GM12878 (cell line): ENCODE measurements at regions of chr10 and their contacts with region 1.

Region 1: GRCh38 chr10:99248824-99249223 is 13.2 kb upstream of the HPSE2 start:
- DNase-seq: no peak
- ATAC-seq: no peak
- H3K4me3 ChIP-seq: no peak overlapping the region
- H3K27ac ChIP-seq: no peak overlapping the region
- H3K4me1 ChIP-seq: no peaks in the 10 kb centered on the region
- H3K27me3 ChIP-seq: no peaks in the 10 kb centered on the region
- CTCF ChIP-seq: no peak
- EP300 ChIP-seq: no peak
- POLR2A ChIP-seq: no peak
- RAD21 ChIP-seq: no peak

Region 2: GRCh38 chr10:98460837-98461499 is 787.9 kb before region 1 on chr10:
- CTCF ChIA-PET with region 1: no interaction called
- POLR2A ChIA-PET with region 1: no interaction called
- RAD21 ChIA-PET with region 1: interaction called, 36 read pairs
- SMC1A ChIA-PET with region 1: interaction called, 3 read pairs
- in situ Hi-C with region 1: loop called (anchors 5 kb)
- intact Hi-C with region 1: no loop called
- DNase-seq: no peak
- ATAC-seq: no peak
- H3K4me3 ChIP-seq: no peak overlapping the region
- H3K27ac ChIP-seq: no peak overlapping the region
- H3K4me1 ChIP-seq: no peaks in the 10 kb centered on the region
- H3K27me3 ChIP-seq: no peaks in the 10 kb centered on the region; a peak in 1 of 4 replicates
- CTCF ChIP-seq: no peak
- EP300 ChIP-seq: no peak
- POLR2A ChIP-seq: no peak
- RAD21 ChIP-seq: no peak

Region 3: GRCh38 chr10:98858525-98858924 is 390.3 kb before region 1 on chr10:
- CTCF ChIA-PET with region 1: interaction called, 4 read pairs
- POLR2A ChIA-PET with region 1: no interaction called
- RAD21 ChIA-PET with region 1: no interaction called
- SMC1A ChIA-PET with region 1: interaction called, 3 read pairs
- in situ Hi-C with region 1: no loop called
- intact Hi-C with region 1: loop called (anchors 10 kb)
- DNase-seq: no peak
- ATAC-seq: no peak
- H3K4me3 ChIP-seq: no peak overlapping the region
- H3K27ac ChIP-seq: no peak overlapping the region
- H3K4me1 ChIP-seq: no peaks in the 10 kb centered on the region
- H3K27me3 ChIP-seq: no peaks in the 10 kb centered on the region
- CTCF ChIP-seq: peak in 2 of 3 experiments; percentile 5; a peak in 1 of 6 replicates
- EP300 ChIP-seq: no peak
- POLR2A ChIP-seq: no peak
- RAD21 ChIP-seq: no peak